Left ventricle myocardium superior (tissue), 1 donor: ENCODE measurements at regions of chr7 and their contacts with region 1.

Region 1: GRCh38 chr7:18421297-18422002 is 74.1 kb upstream of the HDAC9 start:
- DNase-seq: no peak
- ATAC-seq: no peak

Region 2: GRCh38 chr7:18345641-18346234 is 75.7 kb before region 1 on chr7:
- intact Hi-C with region 1: no loop called
- DNase-seq: no peak
- ATAC-seq: peak; percentile 36

Region 3: DNA sequence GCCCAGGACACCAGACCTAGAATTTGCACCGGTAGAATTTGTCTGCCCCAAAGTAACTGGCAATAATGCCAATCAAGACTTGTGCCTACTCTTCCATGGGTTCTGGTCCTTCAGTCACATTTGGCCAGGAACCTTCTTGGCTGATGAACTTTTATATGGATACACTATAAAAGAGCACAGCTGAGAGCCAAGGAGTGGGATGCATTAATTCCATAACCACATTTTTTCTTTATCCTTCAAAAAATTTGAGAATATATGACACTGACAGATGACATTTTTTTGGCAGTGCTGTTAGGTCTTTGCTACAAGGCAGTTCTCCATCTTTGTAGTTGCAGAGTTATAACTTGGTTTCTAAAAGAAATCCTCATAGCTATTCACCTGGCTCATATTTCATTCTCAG is 55.1 kb before region 1 on chr7:
- intact Hi-C with region 1: loop called (anchors 5 kb)
- DNase-seq: no peak
- ATAC-seq: no peak

Region 4: DNA sequence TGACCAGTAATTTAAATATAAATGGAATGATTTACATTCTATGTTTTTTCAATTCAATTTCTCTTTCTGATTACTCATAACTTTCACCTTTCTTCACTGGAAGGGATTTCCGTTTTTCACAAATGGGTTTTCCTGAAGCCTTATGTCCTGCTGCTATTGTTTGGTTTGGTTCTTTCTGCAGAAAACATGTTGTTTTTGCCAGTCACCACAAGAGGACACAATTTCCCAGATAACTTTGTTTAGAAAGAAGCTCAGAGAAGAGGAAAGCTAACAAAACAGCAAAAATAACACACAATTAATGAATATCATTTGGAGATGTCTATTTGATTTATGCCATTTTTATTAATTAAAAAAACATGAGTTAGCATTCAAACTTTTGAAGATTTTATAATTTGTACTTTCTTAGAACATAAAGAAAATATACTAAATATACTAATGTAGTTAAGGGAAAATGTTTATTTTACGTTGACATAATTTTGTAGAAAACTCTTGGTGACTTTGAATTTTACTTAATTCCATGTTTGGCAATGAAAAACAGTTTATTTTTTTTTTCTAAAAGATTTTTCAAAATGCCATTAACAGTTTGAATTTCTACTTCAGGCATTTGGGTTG is 700.6 kb after region 1 on chr7:
- intact Hi-C with region 1: no loop called
- DNase-seq: no peak
- ATAC-seq: no peak